Cardiac septum (tissue), 1 donor: ENCODE measurements at regions of chr6 and their contacts with region 1.

Region 1: DNA sequence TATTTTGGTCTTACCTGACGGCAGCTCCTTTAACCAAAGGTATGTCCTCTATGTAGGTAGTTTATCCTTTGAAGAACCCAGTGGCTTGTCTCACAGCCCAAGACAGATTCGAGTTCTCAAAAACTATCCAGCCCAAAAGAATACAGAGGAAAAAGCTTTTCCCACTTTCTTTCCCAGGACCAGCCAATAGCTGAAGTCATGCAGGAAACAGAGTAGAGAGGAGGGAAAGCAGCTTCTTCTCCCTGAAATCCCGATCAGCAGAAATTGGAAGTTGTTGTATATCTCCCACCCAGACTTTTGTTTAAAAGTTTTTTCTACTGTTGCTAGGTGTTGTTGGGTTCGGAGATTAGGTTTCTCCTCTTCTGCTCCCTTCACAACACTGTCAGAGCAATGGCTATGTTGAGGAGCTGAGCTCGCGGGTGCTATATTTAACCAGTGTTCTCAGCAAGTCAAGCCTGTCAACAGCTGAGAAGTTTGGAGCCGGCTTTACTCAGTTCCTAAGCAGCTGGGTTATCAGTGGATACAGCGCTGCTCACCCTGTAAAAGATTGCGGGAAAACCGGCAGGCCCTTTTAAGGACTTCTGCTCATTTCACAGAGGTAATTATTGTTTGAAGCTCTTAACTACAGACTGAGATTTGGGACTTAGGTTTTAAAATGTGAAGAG is at the start of gene FILIP1:
- DNase-seq: peak; percentile 81
- total RNA-seq, gene FILIP1: 183 TPM

Region 2: GRCh38 chr6:74735304-74735703 is 758.2 kb before region 1 on chr6:
- intact Hi-C with region 1: no loop called
- DNase-seq: no peak

Region 3: GRCh38 chr6:74979055-74979766 is 514.3 kb before region 1 on chr6:
- intact Hi-C with region 1: no loop called
- DNase-seq: no peak

Region 4: DNA sequence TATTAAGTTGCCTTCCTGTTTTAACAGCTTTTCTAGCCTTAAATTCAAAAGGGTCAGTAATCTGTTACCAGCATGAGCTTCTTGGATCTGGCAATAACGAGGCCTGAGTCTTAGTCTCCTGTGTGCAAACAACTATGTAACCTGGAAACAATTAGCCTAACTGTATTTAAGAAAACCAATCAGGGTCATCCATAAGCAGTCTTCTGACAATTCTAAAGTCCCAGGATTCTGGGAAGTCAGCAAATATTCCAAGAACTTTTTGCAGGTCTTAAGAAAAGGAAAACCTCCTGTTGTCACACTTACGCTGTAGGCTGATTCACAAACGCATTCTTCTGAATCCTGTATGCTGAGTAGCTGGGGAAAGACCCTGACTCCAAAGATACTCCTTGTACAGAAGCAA is 378.1 kb before region 1 on chr6:
- intact Hi-C with region 1: no loop called
- DNase-seq: no peak

Region 5: GRCh38 chr6:75437421-75437891 is 56.1 kb before region 1 on chr6:
- intact Hi-C with region 1: loop called (anchors 5 kb)
- DNase-seq: no peak

Region 6: DNA sequence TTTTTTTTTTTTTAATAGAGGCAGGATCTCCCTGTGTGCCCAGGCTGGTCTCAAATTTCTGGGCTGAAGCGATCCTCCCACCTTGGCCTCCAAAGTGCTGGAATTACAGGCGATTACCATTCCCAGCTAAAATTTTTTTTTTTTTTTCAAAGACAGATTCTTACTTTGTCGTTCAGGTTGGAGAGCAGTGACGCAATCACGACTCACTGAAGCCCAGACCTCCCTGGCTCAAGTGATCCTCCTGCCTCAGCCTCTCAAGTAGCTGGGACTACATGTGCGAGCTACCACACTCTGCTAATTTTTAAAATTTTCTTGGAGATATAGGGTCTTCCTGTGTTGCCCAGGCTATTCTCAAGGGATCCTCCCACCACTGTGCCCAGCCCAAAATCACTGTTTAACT is 197.5 kb after region 1 on chr6:
- intact Hi-C with region 1: no loop called
- DNase-seq: no peak